ENCODE measurements at regions of chr11 and their contacts with region 1.

Region 1: GRCh38 chr11:58629857-58630256 is 7.4 kb downstream of the CNTF start:
- DNase-seq: peak; percentile 22
- ATAC-seq: peak; percentile 78
- H3K4me3 ChIP-seq: no peak overlapping the region
- H3K27ac ChIP-seq: no peak overlapping the region
- H3K4me1 ChIP-seq: peaks cover 8 to 25% of the 10 kb centered on the region in 2 experiments
- H3K27me3 ChIP-seq: no peaks in the 10 kb centered on the region
- CTCF ChIP-seq: peak; percentile 52 to 75 (median 67); a peak in 5 of 6 replicates
- POLR2A ChIP-seq: no peak
- RAD21 ChIP-seq: peak; percentile 58

Region 2: GRCh38 chr11:58640386-58641023 is 10.6 kb after region 1 on chr11:
- CTCF ChIA-PET with region 1: interaction called, 13 read pairs
- POLR2A ChIA-PET with region 1: no interaction called
- RAD21 ChIA-PET with region 1: no interaction called
- intact Hi-C with region 1: no loop called
- DNase-seq: no peak
- ATAC-seq: no peak
- H3K4me3 ChIP-seq: no peak overlapping the region
- H3K27ac ChIP-seq: no peak overlapping the region
- H3K4me1 ChIP-seq: no peaks in the 10 kb centered on the region
- H3K27me3 ChIP-seq: no peaks in the 10 kb centered on the region
- CTCF ChIP-seq: no peak
- POLR2A ChIP-seq: no peak
- RAD21 ChIP-seq: no peak

Region 3: DNA sequence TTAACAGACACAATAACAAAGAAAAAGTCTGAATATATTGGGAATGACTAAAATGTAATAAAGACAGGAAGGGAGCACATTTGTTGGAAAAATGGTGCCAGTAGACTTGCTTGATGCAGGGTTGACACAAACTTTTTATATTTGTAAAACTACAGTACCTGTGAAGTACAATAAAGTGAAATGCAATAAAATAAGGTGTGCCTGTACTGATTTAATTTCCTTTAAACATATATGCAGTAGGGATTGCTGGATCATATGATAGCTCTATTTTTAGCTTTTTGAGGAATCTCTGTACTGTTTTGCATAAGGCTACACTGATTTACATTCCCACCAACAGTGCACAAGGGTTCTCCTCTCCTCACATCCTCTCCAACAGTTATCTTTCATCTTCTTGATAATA is 226.9 kb after region 1 on chr11:
- CTCF ChIA-PET with region 1: no interaction called
- POLR2A ChIA-PET with region 1: no interaction called
- RAD21 ChIA-PET with region 1: no interaction called
- intact Hi-C with region 1: no loop called
- DNase-seq: no peak
- ATAC-seq: no peak
- H3K4me3 ChIP-seq: no peak overlapping the region
- H3K27ac ChIP-seq: no peak overlapping the region
- H3K4me1 ChIP-seq: no peaks in the 10 kb centered on the region
- H3K27me3 ChIP-seq: no peaks in the 10 kb centered on the region
- CTCF ChIP-seq: no peak
- POLR2A ChIP-seq: no peak
- RAD21 ChIP-seq: no peak

Region 4: DNA sequence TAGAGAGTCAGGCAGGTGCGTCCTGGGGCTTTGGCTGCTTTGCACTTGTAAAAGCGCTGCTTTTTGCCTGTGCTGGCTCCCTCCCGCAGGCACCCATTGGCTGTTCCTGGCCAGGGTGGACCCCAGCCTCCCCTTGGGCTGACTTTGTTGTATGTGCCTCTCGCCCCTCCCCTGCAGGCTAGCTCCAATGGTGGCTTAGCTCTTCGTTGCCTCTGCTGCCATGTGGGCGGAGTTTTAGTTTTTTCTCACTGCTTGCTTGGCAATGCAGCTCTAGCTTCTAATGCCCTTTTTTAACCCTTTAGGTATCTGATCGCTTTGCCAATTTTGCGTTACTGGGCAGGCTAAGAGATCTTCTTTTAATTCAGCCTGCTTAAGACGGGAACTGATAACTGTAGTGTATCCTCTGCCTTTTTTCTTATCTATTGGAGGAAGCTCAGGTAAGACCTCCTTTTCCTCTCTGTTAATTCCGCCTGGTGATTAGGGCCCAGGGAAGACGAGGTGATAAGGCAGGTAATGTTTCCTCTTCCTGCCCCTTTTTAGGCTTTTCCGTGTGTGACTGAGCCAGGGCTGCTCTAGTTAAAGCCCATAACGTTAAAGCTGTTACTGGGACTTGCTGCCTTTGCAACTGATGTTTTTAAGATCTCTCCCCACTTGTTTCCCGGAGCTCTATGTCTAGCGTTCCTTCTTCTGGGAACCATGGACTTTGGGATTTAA is 297.7 kb after region 1 on chr11:
- CTCF ChIA-PET with region 1: no interaction called
- POLR2A ChIA-PET with region 1: no interaction called
- RAD21 ChIA-PET with region 1: no interaction called
- intact Hi-C with region 1: no loop called
- DNase-seq: no peak
- ATAC-seq: peak; percentile 64
- H3K4me3 ChIP-seq: no peak overlapping the region
- H3K27ac ChIP-seq: no peak overlapping the region
- H3K4me1 ChIP-seq: peaks cover 12 to 17% of the 10 kb centered on the region in 2 experiments
- H3K27me3 ChIP-seq: no peaks in the 10 kb centered on the region
- CTCF ChIP-seq: no peak
- POLR2A ChIP-seq: no peak
- RAD21 ChIP-seq: no peak